ENCODE measurements at regions of chr17 and their contacts with region 1.

Region 1: DNA sequence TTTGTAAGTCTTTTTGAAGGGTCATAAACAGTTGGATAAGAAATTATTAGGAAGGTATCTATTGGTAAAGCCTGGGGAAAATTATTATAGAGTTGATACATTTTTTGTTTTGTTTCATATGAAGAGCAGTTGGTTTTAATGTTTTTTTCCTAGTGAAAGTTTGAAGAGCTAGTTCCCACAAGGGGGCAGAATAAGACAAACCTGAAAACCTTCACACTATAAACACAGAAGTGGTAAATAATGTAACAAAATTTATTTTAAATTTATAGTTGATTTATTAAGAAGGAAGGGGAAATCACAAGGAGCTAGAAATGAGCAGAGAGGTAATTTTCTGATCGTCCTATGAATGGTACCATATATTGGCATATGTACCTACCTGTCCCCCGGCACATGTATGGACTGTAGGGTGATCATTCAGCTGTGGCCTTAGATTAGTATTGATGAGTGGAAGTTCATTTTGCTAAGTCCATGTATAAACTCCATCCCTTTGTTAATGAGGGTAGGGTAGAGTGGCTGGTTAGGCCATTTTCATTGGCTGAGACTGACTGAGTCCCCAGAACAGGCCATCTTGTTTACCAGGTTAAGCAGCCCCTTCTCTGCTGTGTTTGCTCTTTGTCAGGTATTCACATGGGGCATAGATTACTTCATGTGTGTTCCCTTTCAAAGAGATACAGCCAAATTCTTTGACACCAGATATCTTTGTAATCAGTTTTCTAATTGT is 116.4 kb downstream of the TANC2 start:
- DNase-seq: peak; percentile 19
- H3K4me3 ChIP-seq: no peak overlapping the region
- H3K27ac ChIP-seq: peak overlapping the region; percentile 59 to 62
- H3K4me1 ChIP-seq: peaks cover 7 to 20% of the 10 kb centered on the region in 2 experiments; a peak in 3 of 4 replicates
- H3K27me3 ChIP-seq: no peaks in the 10 kb centered on the region
- CTCF ChIP-seq: peak; percentile 85
- EP300 ChIP-seq: no peak
- RAD21 ChIP-seq: peak; percentile 87

Region 2: GRCh38 chr17:62739645-62740388 is 342.6 kb before region 1 on chr17:
- CTCF ChIA-PET with region 1: no interaction called
- POLR2A ChIA-PET with region 1: no interaction called
- DNase-seq: no peak
- H3K4me3 ChIP-seq: no peak overlapping the region
- H3K27ac ChIP-seq: no peak overlapping the region
- H3K4me1 ChIP-seq: no peaks in the 10 kb centered on the region
- H3K27me3 ChIP-seq: no peaks in the 10 kb centered on the region
- CTCF ChIP-seq: no peak
- EP300 ChIP-seq: no peak
- RAD21 ChIP-seq: no peak

Region 3: DNA sequence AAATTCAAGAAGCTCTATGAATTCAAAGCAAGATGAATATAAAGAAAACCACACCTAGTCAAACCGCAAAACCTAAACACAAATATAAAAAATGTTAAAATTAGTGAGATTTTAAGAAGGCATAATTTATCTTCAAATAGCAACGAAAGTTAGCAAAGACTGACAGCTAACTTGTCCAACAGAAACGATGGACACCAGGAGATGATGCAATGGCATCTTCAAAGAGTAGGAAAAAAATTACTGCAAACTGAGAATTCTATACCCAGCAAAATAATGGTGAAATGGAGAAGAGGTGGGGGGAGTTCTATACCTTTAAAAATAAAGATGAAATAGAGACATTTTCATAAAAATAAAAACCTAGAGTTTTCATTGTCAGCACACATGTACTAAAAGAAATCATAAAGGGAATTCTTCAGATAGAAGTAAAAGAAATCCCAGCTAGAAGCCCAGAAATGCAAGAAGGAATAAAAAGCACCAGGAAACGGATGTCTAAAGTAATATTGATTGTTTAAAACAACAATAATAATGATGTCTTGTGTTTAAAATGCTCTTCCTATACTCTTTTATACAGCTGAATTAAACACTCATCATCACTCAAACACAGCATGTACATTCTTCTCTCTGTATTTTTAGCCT is 141.0 kb before region 1 on chr17:
- CTCF ChIA-PET with region 1: no interaction called
- POLR2A ChIA-PET with region 1: no interaction called
- DNase-seq: no peak
- H3K4me3 ChIP-seq: no peak overlapping the region
- H3K27ac ChIP-seq: no peak overlapping the region
- H3K4me1 ChIP-seq: no peaks in the 10 kb centered on the region
- H3K27me3 ChIP-seq: no peaks in the 10 kb centered on the region
- CTCF ChIP-seq: no peak
- EP300 ChIP-seq: no peak
- RAD21 ChIP-seq: no peak

Region 4: DNA sequence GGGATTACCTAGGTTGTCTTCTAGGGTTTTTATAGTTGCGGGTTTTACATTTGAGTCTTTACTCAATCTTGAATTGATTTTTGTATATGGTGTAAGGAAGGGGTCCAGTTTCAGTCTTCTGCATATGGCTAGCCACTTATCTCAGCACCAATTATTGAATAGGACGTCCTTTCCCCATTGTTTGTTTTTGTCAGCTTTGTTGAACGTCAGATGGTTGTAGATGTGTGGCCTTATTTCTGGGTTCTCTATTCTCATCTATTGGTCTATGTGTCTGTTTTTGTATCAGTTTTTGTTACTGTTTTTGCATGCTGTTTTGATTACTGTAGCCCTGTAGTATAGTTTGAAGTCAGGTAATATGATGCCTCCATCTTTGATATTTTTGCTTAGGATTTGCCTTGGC is 23.9 kb before region 1 on chr17:
- CTCF ChIA-PET with region 1: interaction called, 10 read pairs
- POLR2A ChIA-PET with region 1: no interaction called
- DNase-seq: no peak
- H3K4me3 ChIP-seq: no peak overlapping the region
- H3K27ac ChIP-seq: no peak overlapping the region
- H3K4me1 ChIP-seq: no peaks in the 10 kb centered on the region
- H3K27me3 ChIP-seq: no peaks in the 10 kb centered on the region
- CTCF ChIP-seq: no peak
- EP300 ChIP-seq: no peak
- RAD21 ChIP-seq: no peak

Region 5: DNA sequence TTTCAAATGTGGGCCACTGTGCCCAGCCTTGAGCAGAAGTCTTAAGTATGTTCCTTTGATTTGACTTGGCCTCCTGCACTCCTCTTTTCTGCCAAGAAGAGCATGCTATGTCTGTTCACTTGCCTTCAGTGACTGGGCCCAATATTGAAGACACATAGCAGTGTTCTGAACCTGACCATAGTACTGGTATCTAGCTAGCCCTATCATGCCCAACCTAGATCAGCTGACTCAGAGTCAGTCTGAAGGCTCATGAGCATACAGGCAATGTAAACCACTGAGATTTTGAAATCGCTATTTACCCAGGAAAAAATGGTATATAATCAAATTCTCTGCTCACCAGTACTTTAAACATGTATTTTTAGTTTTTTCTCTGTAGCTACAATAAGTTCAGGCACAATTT is 13.0 kb after region 1 on chr17:
- CTCF ChIA-PET with region 1: interaction called, 25 read pairs
- POLR2A ChIA-PET with region 1: no interaction called
- DNase-seq: no peak
- H3K4me3 ChIP-seq: no peak overlapping the region
- H3K27ac ChIP-seq: peak overlapping the region in 1 of 2 experiments; percentile 40; a peak in 2 of 4 replicates
- H3K4me1 ChIP-seq: peaks cover 0 to 15% of the 10 kb centered on the region in 2 experiments; a peak in 3 of 4 replicates
- H3K27me3 ChIP-seq: no peaks in the 10 kb centered on the region
- CTCF ChIP-seq: no peak
- EP300 ChIP-seq: no peak
- RAD21 ChIP-seq: no peak

Region 6: GRCh38 chr17:63381101-63381729 is 298.8 kb after region 1 on chr17:
- CTCF ChIA-PET with region 1: interaction called, 12 read pairs
- POLR2A ChIA-PET with region 1: no interaction called
- DNase-seq: peak; percentile 71
- H3K4me3 ChIP-seq: no peak overlapping the region
- H3K27ac ChIP-seq: peak overlapping the region; percentile 71 to 96
- H3K4me1 ChIP-seq: peaks cover 38 to 51% of the 10 kb centered on the region in 2 experiments
- H3K27me3 ChIP-seq: no peaks in the 10 kb centered on the region
- CTCF ChIP-seq: no peak
- EP300 ChIP-seq: peak; percentile 43 to 98; a peak in 3 of 4 replicates
- RAD21 ChIP-seq: peak; percentile 13

Region 7: GRCh38 chr17:63399856-63400255 is 317.4 kb after region 1 on chr17:
- CTCF ChIA-PET with region 1: interaction called, 98 read pairs
- POLR2A ChIA-PET with region 1: no interaction called
- DNase-seq: peak; percentile 54
- H3K4me3 ChIP-seq: no peak overlapping the region
- H3K27ac ChIP-seq: peak overlapping the region; percentile 58 to 94
- H3K4me1 ChIP-seq: peaks cover 27 to 41% of the 10 kb centered on the region in 2 experiments
- H3K27me3 ChIP-seq: no peaks in the 10 kb centered on the region
- CTCF ChIP-seq: no peak
- EP300 ChIP-seq: peak in 1 of 2 experiments; percentile 52; a peak in 2 of 4 replicates
- RAD21 ChIP-seq: peak; percentile 41

Region 8: GRCh38 chr17:63419949-63420867 is 337.8 kb after region 1 on chr17:
- CTCF ChIA-PET with region 1: interaction called, 16 read pairs
- POLR2A ChIA-PET with region 1: no interaction called
- DNase-seq: no peak
- H3K4me3 ChIP-seq: no peak overlapping the region
- H3K27ac ChIP-seq: no peak overlapping the region
- H3K4me1 ChIP-seq: peaks cover 0 to 8% of the 10 kb centered on the region in 2 experiments; a peak in 2 of 4 replicates
- H3K27me3 ChIP-seq: no peaks in the 10 kb centered on the region
- CTCF ChIP-seq: no peak
- EP300 ChIP-seq: no peak
- RAD21 ChIP-seq: no peak